GM13976 (cell line): ENCODE measurements at regions of chr11 and their contacts with region 1.

Region 1: GRCh38 chr11:44621140-44621681 is 55.7 kb downstream of the CD82 start:
- DNase-seq: peak; percentile 81
- CTCF ChIP-seq: peak; percentile 73

Region 2: GRCh38 chr11:44515048-44515447 is 106.2 kb before region 1 on chr11:
- in situ Hi-C with region 1: no loop called
- DNase-seq: no peak
- CTCF ChIP-seq: no peak

Region 3: DNA sequence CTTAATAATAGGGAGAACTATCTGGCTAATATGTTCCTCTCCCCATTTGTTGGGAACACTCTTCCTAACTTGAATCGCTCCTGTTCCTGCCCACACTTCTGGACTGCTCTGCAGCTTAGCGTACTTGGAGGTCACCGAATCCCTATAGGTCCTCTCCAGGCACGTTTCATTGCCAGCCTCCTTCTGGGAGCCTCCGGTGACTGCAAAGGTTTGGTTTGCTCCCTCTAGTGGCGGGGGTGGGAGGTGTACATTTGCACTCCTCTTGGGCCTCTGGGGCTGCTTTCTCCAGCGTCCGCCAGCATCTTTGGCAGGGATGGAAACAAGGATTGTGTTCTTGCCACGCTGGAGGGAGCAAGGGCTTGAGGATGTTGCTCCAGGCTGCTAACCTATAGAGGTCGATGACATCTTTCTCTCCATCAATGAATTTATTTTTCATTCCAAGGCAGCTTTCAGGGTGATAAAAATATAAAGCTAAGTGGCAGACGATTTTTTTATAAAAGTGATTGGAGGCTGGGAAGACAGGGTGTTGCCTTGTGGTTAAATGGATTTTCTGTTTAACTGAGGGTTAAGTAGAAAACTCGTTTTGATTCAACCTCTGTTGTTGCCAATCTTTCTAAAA is 154.3 kb after region 1 on chr11:
- in situ Hi-C with region 1: loop called (anchors 10 kb)
- DNase-seq: peak; percentile 71
- CTCF ChIP-seq: peak; percentile 68

Region 4: GRCh38 chr11:44911029-44911814 is 290.0 kb after region 1 on chr11:
- in situ Hi-C with region 1: loop called (anchors 10 kb)
- DNase-seq: peak; percentile 89
- CTCF ChIP-seq: peak; percentile 70